ENCODE measurements at regions of chr1 and their contacts with region 1.

Region 1: DNA sequence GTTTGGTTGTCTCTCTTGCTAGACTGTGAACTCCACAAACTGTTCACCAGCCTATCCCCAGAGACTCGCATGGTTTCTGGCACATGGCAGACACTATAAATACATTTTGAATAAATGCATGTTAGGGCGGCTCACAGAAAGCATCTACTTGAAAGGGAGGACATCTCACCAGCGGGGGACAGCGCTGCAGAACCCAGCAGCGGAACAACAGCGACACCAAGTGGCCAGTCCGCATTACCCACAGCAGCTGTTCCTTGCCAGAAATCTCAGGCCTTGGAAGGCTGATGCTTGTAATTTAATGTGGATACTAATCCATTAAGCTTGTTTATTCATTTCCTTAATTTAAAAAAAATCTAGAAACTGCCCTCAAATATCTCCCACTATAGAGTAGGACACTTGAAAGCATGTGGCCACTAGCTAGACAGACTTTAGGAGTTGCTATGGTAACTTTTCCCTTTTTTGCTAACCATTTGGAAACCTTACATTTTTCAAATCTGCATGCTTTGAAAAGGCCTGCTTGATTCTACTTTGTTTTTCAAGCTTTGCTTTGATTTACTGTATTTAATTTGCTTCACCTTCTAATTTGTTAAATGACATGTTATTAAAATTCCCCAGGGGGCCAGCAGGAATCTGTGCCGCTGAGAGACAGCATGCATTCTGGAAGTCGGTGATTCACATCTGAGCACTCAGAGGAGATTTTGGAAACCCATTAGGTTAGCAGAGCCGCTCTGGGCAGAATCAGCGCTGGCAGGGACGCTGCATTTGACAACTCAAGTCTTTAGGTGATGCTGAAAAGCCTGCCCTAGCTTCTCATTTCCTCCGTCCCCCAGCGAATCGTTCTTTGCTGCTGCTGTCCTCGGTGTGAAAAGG is 63.5 kb upstream of the SSX2IP start:
- DNase-seq: peak; percentile 54 to 72 (median 68)
- ATAC-seq: peak; percentile 84 to 92 (median 90)
- H3K4me3 ChIP-seq: no peak overlapping the region
- H3K27ac ChIP-seq: no peak overlapping the region
- H3K4me1 ChIP-seq: peaks cover 0 to 15% (median 3%) of the 10 kb centered on the region in 12 donors
- H3K27me3 ChIP-seq: peaks cover 0 to 3% (median 0%) of the 10 kb centered on the region in 9 donors
- CTCF ChIP-seq: peak; percentile 83 to 93 (median 88)
- POLR2A ChIP-seq: no peak

Region 2: DNA sequence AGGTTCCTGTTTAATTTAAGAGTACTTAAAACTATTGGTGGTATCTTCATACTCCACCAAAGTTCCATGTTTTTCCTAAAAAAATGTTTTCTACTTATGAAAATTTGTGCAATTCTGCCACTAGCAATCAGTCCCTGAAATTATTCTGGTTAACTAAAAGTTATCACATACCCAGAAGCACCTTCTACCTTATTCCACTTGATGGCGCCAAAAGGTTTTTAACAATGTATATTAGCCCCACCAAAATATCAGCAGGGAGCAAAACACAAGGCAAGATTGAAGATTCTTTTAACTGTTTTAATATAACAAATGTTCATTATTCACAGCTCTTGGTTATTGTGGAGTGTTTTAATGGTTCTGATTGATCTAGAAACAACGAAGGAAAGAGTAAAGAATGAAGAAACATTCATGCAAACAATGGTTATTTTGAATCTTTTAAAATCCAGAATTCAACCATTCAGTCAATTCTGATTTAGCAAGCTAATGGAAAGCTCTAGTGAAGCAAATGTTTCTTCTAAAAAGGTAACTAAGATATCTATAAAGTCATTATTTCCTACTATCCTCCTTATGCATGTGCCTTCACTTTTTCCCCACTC is 822.0 kb before region 1 on chr1:
- intact Hi-C with region 1: loop called in 3 of 10 experiments (anchors 10 kb)
- DNase-seq: peak in 1 of 5 donors; percentile 10
- ATAC-seq: peak; percentile 58 to 80 (median 66)
- H3K4me3 ChIP-seq: no peak overlapping the region
- H3K27ac ChIP-seq: no peak overlapping the region
- H3K4me1 ChIP-seq: peaks cover 0 to 5% (median 0%) of the 10 kb centered on the region in 12 donors
- H3K27me3 ChIP-seq: no peaks in the 10 kb centered on the region
- CTCF ChIP-seq: peak; percentile 56 to 76 (median 68)
- POLR2A ChIP-seq: no peak

Region 3: GRCh38 chr1:84143796-84144565 is 609.8 kb before region 1 on chr1 and contains the start of gene PRKACB:
- intact Hi-C with region 1: loop called in 2 of 10 experiments (anchors 10 kb)
- DNase-seq: no peak
- ATAC-seq: peak in 3 of 4 donors; percentile 56 to 67 (median 64)
- H3K4me3 ChIP-seq: peak within 1 kb of the TSS in 6 of 12 donors; percentile 0 to 52 (median 24)
- H3K27ac ChIP-seq: peak within 1 kb of the TSS in 1 of 12 donors; percentile 87
- H3K4me1 ChIP-seq: peaks cover 0 to 26% (median 0%) of the 10 kb centered on the region in 12 donors
- H3K27me3 ChIP-seq: no peaks in the 10 kb centered on the region
- CTCF ChIP-seq: no peak
- POLR2A ChIP-seq: no peak
- total RNA-seq, gene PRKACB: 16.6 to 52.3 (median 41.1) TPM

Region 4: DNA sequence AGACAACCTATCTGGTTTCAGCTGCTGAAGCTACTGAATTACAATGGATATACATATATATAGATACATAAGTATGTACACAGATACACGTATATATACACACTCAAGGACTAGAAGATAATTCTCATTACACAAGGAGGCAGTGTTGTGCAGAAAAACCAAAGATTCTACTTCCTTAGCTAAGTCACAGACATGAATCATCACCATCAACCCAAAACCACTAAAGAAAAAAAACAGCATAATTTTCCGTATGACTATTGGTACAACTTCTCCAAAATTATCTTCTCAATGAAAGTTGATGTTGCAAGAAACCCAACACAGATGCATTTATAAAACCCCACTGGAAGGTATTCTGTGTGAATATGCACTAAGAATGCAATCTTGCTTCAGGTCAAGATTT is 311.5 kb before region 1 on chr1:
- intact Hi-C with region 1: loop called in 7 of 10 experiments (anchors 5 to 10 kb)
- DNase-seq: no peak
- ATAC-seq: peak; percentile 51 to 78 (median 74)
- H3K4me3 ChIP-seq: no peak overlapping the region
- H3K27ac ChIP-seq: peak overlapping the region in 1 of 12 donors; percentile 44
- H3K4me1 ChIP-seq: peaks cover 0 to 22% (median 0%) of the 10 kb centered on the region in 12 donors
- H3K27me3 ChIP-seq: peaks cover 0 to 12% (median 0%) of the 10 kb centered on the region in 9 donors
- CTCF ChIP-seq: peak; percentile 7 to 61 (median 46)
- POLR2A ChIP-seq: no peak

Measured in heart left ventricle (tissue), 16 donors.